ENCODE measurements at regions of chr9 and their contacts with region 1.

Region 1: DNA sequence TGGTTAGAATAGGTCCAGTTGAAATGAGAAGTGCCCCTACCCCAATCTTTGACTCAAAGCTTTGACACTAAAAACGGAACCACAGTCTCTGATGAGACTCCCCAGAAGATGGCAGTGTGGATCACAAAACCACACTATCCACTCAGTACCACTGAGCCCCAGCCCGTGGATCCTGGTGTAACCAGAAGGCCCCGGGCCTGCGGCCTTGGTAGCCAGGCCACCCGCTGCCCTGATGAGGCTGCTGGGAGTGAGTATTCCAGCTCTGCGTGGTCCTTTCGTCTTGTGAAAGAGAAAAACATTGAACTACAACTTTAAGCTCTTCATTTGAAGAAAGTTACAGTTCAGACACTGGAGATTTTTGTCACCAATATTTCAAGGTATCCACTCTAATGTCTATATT is 42.2 kb upstream of the FBP1 start:
- DNase-seq: peak; percentile 91

Region 2: DNA sequence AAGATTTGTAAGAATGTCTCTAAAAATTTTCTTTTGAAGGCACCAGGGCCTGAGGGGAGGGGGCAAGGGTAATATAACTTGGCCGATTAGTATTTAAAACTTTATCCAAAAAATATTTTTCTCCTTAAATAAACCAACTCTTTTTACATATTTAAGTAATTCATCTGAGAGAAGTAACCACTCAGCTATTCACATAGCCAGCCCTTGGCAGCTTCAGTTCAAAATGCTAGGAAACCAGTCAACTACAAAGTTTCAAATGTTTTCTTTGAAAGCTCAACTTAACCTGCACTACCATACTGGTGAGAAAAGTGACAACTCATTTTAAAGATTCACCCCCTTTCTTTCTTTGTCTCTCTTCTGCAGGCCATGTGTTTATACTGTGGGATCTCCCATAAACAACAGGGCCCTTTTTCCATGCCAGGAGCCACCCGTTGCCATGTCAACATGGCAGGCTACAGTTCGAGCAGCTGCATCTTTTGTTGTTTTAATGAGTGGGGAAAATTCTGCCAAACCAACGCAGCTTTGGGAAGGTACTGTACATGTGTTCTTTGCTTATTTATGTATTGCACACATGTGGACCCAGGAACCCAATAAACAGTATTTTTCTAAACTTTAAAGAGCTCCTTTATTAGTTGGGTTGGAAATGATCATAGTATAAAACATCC is 91.3 kb after region 1 on chr9:
- intact Hi-C with region 1: loop called in 1 of 2 experiments (anchors 10 kb)
- DNase-seq: no peak

Measured in posterior vena cava (tissue), 2 donors.